Pancreas (tissue), 10 donors: ENCODE measurements at regions of chr14 and their contacts with region 1.

Region 1: DNA sequence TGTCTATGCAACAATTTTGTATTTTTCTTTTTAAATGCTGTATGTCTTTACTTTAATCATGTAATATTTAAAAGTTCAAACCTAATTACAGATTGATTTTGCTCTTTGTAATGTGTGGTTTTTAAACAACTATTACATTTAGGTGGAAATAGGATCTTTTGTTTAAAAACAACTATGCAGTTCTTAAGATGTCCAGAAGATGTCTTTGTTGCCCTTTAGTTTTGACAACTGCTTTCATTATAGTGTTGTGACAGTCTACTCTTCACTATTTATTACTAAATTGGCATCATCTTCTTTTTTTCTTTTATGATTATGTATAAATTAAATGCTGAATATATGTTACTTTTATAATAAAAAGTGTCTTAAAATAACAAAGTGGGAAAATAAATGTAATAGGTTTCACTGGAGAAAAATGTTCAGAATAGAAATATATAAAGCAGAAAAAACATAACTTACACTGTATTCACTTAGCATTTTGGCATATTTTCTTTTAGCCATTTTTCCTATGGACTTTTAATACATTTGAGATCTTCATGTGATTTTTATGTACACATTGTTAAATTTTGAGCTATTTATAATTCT is 27.1 kb upstream of the PCNX4 start:
- DNase-seq: no peak
- ATAC-seq: peak in 3 of 4 donors; percentile 47 to 59 (median 55)
- H3K4me3 ChIP-seq: no peak overlapping the region
- H3K27ac ChIP-seq: no peak overlapping the region
- H3K4me1 ChIP-seq: no peaks in the 10 kb centered on the region
- H3K27me3 ChIP-seq: no peaks in the 10 kb centered on the region
- CTCF ChIP-seq: peak in 1 of 4 donors; percentile 16

Region 2: DNA sequence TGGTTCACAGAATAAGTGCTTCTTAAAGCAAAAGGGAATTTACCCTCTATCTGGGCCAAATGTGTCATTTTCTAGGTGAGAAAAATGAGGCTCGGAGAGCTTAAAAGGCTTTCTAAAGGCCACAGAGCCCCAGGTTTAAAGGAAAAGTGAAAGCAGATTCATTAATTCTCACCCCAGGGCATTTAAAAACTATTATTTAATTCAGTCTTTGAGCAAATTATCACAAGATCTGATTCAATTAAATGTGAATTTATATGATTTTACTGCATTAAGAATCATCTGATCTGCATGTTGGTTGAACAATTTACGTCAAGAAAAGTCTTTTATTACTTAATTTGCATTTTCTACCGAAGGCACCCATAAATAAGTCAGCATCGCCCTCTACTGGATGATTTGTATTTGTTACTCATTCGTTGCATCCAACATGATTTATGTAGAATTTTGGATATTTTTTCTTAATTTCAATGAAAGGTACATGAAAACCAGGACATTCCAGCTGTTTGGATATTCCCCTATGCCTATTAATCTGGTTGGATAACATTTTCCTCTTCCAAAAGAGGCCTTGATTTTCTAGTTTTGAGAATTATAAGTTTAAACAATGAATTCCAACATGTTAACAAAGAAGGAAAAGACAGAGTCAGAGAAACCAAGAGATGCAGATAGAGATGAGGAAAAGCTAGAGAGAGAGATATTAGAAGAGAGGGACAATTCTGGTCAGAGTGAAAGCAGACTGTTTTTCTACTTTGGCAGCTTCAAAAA is 119.7 kb after region 1 on chr14:
- intact Hi-C with region 1: loop called in 1 of 3 experiments (anchors 10 kb)
- DNase-seq: no peak
- ATAC-seq: peak; percentile 55 to 91 (median 83)
- H3K4me3 ChIP-seq: peak overlapping the region in 2 of 4 donors; percentile 23 to 31
- H3K27ac ChIP-seq: peak overlapping the region in 2 of 4 donors; percentile 3 to 34
- H3K4me1 ChIP-seq: no peaks in the 10 kb centered on the region
- H3K27me3 ChIP-seq: no peaks in the 10 kb centered on the region
- CTCF ChIP-seq: peak in 3 of 4 donors; percentile 56 to 61 (median 59)